ENCODE measurements at regions of chr3 and their contacts with region 1.

Region 1: DNA sequence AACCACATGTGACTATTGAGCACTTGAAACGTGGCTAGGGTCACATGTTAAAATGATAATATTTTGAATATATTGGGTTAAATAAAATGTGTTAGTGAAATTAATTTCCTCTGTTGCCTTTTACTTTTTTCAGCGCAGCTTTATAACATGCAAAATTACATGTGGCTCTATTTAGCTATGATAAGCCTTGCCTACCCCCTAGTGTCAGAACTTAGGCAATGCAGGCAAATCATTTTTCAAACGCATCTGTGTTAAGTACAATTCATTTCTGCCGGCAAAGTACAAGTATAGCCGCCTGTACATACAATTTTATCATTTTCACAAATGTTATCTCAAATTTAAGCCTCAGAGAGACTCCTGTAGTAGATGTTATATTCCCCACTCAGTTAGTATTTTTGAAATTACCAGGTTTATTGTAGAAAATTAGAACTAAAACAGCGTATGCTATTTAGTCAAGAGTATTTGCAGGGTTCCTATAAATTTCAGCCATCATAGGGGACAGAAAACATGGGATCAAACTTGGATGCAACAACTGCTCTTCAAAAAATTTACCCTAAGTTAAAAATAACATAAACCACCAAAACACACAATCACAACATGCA is 56.1 kb downstream of the TAFA4 start:
- DNase-seq: peak in 1 of 2 experiments; percentile 56
- H3K4me3 ChIP-seq: no peak overlapping the region
- H3K4me3 Mint-ChIP-seq: no peak overlapping the region
- H3K27ac Mint-ChIP-seq: no peak overlapping the region
- H3K4me1 ChIP-seq: no peaks in the 10 kb centered on the region
- H3K4me1 Mint-ChIP-seq: no peaks in the 10 kb centered on the region
- H3K27me3 ChIP-seq: no peaks in the 10 kb centered on the region; the same call in 1 of the 2 replicates
- H3K27me3 Mint-ChIP-seq: peaks cover 4% of the 10 kb centered on the region
- CTCF ChIP-seq: peak; percentile 79 to 84

Region 2: GRCh38 chr3:67819447-67819846 is 1056.8 kb before region 1 on chr3:
- CTCF ChIA-PET with region 1: interaction called, 5 read pairs
- POLR2A ChIA-PET with region 1: no interaction called
- intact Hi-C with region 1: loop called (anchors 10 kb)
- DNase-seq: peak in 1 of 2 experiments; percentile 9
- H3K4me3 ChIP-seq: no peak overlapping the region
- H3K4me3 Mint-ChIP-seq: no peak overlapping the region
- H3K27ac Mint-ChIP-seq: no peak overlapping the region
- H3K4me1 ChIP-seq: no peaks in the 10 kb centered on the region
- H3K4me1 Mint-ChIP-seq: no peaks in the 10 kb centered on the region
- H3K27me3 ChIP-seq: no peaks in the 10 kb centered on the region
- H3K27me3 Mint-ChIP-seq: no peaks in the 10 kb centered on the region
- CTCF ChIP-seq: peak; percentile 13 to 51

Region 3: DNA sequence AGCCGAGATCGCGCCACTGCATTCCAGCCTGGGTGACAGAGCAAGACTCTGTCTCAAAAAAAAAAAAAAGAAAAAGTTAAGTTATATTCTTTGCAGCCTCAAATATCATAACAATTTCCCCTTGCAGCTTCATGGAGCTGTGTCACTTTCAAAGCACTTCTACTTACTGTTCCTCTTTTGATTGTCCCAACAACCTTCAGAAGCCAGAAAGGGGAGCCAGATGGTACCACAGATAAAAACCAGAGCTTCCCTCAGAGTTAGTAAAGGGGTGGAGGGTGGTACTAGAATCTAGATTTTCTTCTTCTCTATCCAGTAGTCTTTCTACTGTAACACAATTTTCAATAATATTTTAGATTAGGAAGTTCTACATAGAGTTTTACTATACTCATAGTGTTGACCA is 132.7 kb before region 1 on chr3:
- CTCF ChIA-PET with region 1: no interaction called
- POLR2A ChIA-PET with region 1: no interaction called
- intact Hi-C with region 1: loop called (anchors 10 kb)
- DNase-seq: no peak
- H3K4me3 ChIP-seq: no peak overlapping the region
- H3K4me3 Mint-ChIP-seq: no peak overlapping the region
- H3K27ac Mint-ChIP-seq: no peak overlapping the region
- H3K4me1 ChIP-seq: no peaks in the 10 kb centered on the region
- H3K4me1 Mint-ChIP-seq: peaks cover 6% of the 10 kb centered on the region
- H3K27me3 ChIP-seq: no peaks in the 10 kb centered on the region
- H3K27me3 Mint-ChIP-seq: peaks cover 19% of the 10 kb centered on the region
- CTCF ChIP-seq: no peak

Region 4: GRCh38 chr3:68972358-68972979 is 96.3 kb after region 1 on chr3:
- CTCF ChIA-PET with region 1: no interaction called
- POLR2A ChIA-PET with region 1: no interaction called
- intact Hi-C with region 1: loop called (anchors 1 kb)
- DNase-seq: peak; percentile 59 to 70
- H3K4me3 ChIP-seq: no peak overlapping the region
- H3K4me3 Mint-ChIP-seq: no peak overlapping the region
- H3K27ac Mint-ChIP-seq: no peak overlapping the region
- H3K4me1 ChIP-seq: no peaks in the 10 kb centered on the region
- H3K4me1 Mint-ChIP-seq: no peaks in the 10 kb centered on the region
- H3K27me3 ChIP-seq: no peaks in the 10 kb centered on the region
- H3K27me3 Mint-ChIP-seq: peaks cover 16% of the 10 kb centered on the region
- CTCF ChIP-seq: peak; percentile 71 to 86

Region 5: GRCh38 chr3:69051756-69052471 is 175.7 kb after region 1 on chr3 and contains the start of gene TMF1:
- CTCF ChIA-PET with region 1: no interaction called
- POLR2A ChIA-PET with region 1: no interaction called
- intact Hi-C with region 1: no loop called
- DNase-seq: peak; percentile 96 to 98
- H3K4me3 ChIP-seq: peak within 1 kb of the TSS; percentile 79
- H3K4me3 Mint-ChIP-seq: peak within 1 kb of the TSS; percentile 97
- H3K27ac Mint-ChIP-seq: peak within 1 kb of the TSS; percentile 99
- H3K4me1 ChIP-seq: peaks cover 8% of the 10 kb centered on the region
- H3K4me1 Mint-ChIP-seq: peaks cover 7% of the 10 kb centered on the region
- H3K27me3 ChIP-seq: no peaks in the 10 kb centered on the region
- H3K27me3 Mint-ChIP-seq: no peaks in the 10 kb centered on the region
- CTCF ChIP-seq: no peak
- total RNA-seq, gene TMF1: 30.2 and 35.0 TPM in 2 replicates

Region 6: GRCh38 chr3:70805061-70805759 is 1929.0 kb after region 1 on chr3:
- CTCF ChIA-PET with region 1: no interaction called
- POLR2A ChIA-PET with region 1: no interaction called
- intact Hi-C with region 1: no loop called
- DNase-seq: no peak
- H3K4me3 ChIP-seq: no peak overlapping the region
- H3K4me3 Mint-ChIP-seq: no peak overlapping the region
- H3K27ac Mint-ChIP-seq: no peak overlapping the region
- H3K4me1 ChIP-seq: no peaks in the 10 kb centered on the region
- H3K4me1 Mint-ChIP-seq: no peaks in the 10 kb centered on the region
- H3K27me3 ChIP-seq: no peaks in the 10 kb centered on the region
- H3K27me3 Mint-ChIP-seq: peaks cover 16% of the 10 kb centered on the region
- CTCF ChIP-seq: no peak

Measured in Caco-2 (cell line).